ENCODE measurements at regions of chr6 and their contacts with region 1.

Region 1: DNA sequence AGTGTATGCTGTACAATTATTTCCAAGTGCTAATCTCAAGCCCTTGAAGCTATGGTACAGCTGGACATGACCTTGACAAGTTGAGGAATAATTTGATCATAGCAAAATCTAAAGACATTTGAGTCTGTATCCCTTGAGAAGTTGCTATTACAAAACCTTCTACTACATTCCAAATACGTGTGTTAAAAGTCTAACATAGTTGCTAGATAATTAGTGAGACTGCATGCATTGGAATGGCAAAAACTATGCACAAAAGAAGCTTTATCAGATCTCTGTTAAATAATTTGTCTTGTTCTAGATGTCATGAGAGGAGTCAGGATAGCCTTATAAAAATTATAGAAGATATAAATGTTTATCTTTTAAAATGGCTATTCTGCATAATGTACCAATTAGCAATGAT is 127.8 kb downstream of the GJA1 start:
- DNase-seq: no peak
- H3K4me3 ChIP-seq: no peak overlapping the region
- H3K27ac ChIP-seq: no peak overlapping the region
- H3K4me1 ChIP-seq: peaks cover 16% of the 10 kb centered on the region
- H3K27me3 ChIP-seq: no peaks in the 10 kb centered on the region
- CTCF ChIP-seq: no peak

Region 2: GRCh38 chr6:121274666-121275295 is 288.5 kb before region 1 on chr6:
- CTCF ChIA-PET with region 1: no interaction called
- POLR2A ChIA-PET with region 1: no interaction called
- intact Hi-C with region 1: no loop called
- DNase-seq: peak; percentile 69
- H3K4me3 ChIP-seq: no peak overlapping the region
- H3K27ac ChIP-seq: no peak overlapping the region
- H3K4me1 ChIP-seq: peaks cover 20% of the 10 kb centered on the region
- H3K27me3 ChIP-seq: no peaks in the 10 kb centered on the region
- CTCF ChIP-seq: no peak

Region 3: DNA sequence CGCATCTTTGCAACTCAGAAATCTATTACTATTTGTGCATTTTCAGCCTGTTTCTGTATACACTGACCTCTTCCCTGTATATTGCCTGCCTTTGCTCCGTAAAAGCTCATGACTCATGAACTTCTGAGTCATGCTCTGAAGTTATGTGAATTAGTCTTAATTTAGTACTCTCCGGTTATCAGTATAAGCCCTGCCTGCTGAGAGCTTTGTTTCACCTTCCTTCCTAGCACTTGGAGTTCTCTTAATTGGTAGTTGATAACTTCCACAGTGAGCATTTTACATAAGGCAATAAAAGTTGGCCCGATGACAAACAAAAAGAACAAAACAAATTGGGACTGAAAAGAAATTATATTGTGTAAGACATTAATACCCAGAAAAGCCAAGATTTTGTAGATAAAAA is 103.5 kb after region 1 on chr6:
- CTCF ChIA-PET with region 1: no interaction called
- POLR2A ChIA-PET with region 1: no interaction called
- intact Hi-C with region 1: loop called (anchors 5 kb)
- DNase-seq: peak; percentile 90
- H3K4me3 ChIP-seq: no peak overlapping the region
- H3K27ac ChIP-seq: peak overlapping the region; percentile 8
- H3K4me1 ChIP-seq: peaks cover 8% of the 10 kb centered on the region
- H3K27me3 ChIP-seq: no peaks in the 10 kb centered on the region
- CTCF ChIP-seq: no peak

Region 4: DNA sequence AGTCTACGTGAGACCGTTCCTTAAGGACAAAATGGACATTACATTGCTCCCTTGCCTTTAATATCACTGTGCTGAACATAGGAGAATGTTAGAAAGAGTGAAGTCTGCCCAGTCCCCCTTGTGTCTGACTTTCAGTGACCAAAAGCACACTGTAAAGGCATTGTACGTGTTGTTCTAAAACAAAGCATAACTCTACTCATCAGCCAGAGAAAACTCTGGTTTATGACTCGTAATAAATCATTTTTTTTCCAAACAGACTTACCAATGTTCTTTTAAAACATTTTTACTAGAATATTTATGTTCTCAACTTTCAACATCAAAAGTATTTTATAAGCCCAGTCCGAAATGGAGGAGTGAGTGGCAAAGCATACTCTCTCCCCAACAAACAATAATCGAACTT is 134.6 kb after region 1 on chr6:
- CTCF ChIA-PET with region 1: no interaction called
- POLR2A ChIA-PET with region 1: no interaction called
- intact Hi-C with region 1: no loop called
- DNase-seq: no peak
- H3K4me3 ChIP-seq: no peak overlapping the region
- H3K27ac ChIP-seq: no peak overlapping the region
- H3K4me1 ChIP-seq: peaks cover 5% of the 10 kb centered on the region
- H3K27me3 ChIP-seq: no peaks in the 10 kb centered on the region
- CTCF ChIP-seq: no peak